ENCODE measurements at regions of chr16 and their contacts with region 1.

Region 1: GRCh38 chr16:48632137-48632774 is 22.3 kb upstream of the N4BP1 start:
- DNase-seq: no peak
- ATAC-seq: no peak
- H3K4me3 Mint-ChIP-seq: no peak overlapping the region
- H3K27ac Mint-ChIP-seq: no peak overlapping the region
- H3K4me1 Mint-ChIP-seq: peaks cover 8% of the 10 kb centered on the region
- H3K27me3 Mint-ChIP-seq: no peaks in the 10 kb centered on the region

Region 2: DNA sequence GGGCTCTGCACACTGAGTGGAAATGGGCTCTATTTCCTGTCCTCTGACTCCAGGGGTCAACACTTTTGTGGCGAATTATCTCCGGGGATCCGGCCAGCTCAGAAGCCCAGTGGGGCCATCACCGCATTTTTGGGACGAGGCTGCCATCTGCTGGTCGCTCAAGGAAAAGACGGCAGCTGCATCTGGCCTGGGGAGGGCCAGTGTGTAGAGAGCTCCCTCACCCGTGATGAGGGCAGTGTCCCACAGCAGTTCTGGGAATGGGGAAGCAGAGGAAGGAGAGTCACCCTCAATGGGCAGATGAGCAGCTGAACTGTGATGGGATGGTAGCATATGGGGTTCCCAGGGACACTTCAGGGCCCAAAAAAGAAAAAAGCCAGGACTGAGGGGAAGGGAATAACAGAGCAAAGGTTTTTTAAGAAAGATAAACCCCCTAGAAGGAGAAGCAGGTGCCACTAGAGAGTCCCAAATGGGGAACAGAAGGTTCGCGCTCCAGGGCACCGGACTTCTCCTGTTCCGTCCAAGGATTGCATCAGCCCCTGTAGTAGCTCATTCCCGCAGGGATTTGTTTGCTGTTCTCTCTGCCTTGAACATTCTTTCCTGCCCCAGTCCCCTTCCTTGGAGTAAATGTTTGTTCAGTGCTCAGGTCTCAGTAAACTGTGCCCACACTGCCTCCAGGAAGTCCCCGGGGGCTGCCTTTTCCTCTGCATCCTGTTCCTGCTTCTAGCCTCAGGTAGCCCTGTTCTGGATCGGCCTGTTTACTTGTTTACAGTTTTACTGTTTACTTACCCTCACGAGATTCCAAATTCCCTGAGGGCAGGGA is 467.1 kb before region 1 on chr16:
- CTCF ChIA-PET with region 1: interaction called, 11 read pairs
- POLR2A ChIA-PET with region 1: no interaction called
- DNase-seq: peak; percentile 71
- ATAC-seq: peak; percentile 96
- H3K4me3 Mint-ChIP-seq: no peak overlapping the region
- H3K27ac Mint-ChIP-seq: no peak overlapping the region
- H3K4me1 Mint-ChIP-seq: peaks cover 11% of the 10 kb centered on the region
- H3K27me3 Mint-ChIP-seq: peaks cover 2% of the 10 kb centered on the region

Region 3: DNA sequence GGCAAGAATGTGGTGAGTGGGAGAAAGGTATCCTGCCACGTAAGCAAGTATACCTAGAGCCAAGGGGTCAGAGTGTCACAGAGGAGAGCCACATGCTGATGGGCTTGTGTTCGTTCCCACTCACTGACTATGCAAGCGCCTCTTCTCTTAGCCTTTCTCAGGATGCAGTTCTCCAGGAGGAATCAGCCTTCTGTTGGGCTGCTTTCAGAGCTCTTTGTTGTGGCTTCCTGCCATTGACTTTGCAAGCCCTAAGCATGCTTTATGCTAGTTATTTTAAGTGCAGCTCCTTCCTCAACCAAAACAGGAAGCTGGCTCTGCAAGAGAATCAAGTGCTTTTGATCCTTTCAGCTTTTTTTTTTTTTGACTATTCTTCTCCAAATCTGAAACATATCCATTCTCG is 313.6 kb before region 1 on chr16:
- CTCF ChIA-PET with region 1: interaction called, 12 read pairs
- POLR2A ChIA-PET with region 1: no interaction called
- DNase-seq: peak; percentile 61
- ATAC-seq: peak; percentile 90
- H3K4me3 Mint-ChIP-seq: peak overlapping the region; percentile 56
- H3K27ac Mint-ChIP-seq: peak overlapping the region; percentile 85
- H3K4me1 Mint-ChIP-seq: peaks cover 33% of the 10 kb centered on the region
- H3K27me3 Mint-ChIP-seq: no peaks in the 10 kb centered on the region

Region 4: GRCh38 chr16:48353565-48354163 is 278.6 kb before region 1 on chr16:
- CTCF ChIA-PET with region 1: interaction called, 41 read pairs
- POLR2A ChIA-PET with region 1: interaction called, 3 read pairs
- DNase-seq: peak; percentile 80
- ATAC-seq: peak; percentile 90
- H3K4me3 Mint-ChIP-seq: no peak overlapping the region
- H3K27ac Mint-ChIP-seq: peak overlapping the region; percentile 62
- H3K4me1 Mint-ChIP-seq: peaks cover 7% of the 10 kb centered on the region
- H3K27me3 Mint-ChIP-seq: no peaks in the 10 kb centered on the region

Region 5: GRCh38 chr16:48499923-48500381 is 132.3 kb before region 1 on chr16:
- CTCF ChIA-PET with region 1: no interaction called
- POLR2A ChIA-PET with region 1: no interaction called
- DNase-seq: no peak
- ATAC-seq: no peak
- H3K4me3 Mint-ChIP-seq: no peak overlapping the region
- H3K27ac Mint-ChIP-seq: no peak overlapping the region
- H3K4me1 Mint-ChIP-seq: no peaks in the 10 kb centered on the region
- H3K27me3 Mint-ChIP-seq: no peaks in the 10 kb centered on the region

Region 6: GRCh38 chr16:48526058-48526957 is 105.9 kb before region 1 on chr16:
- CTCF ChIA-PET with region 1: interaction called, 10 read pairs
- POLR2A ChIA-PET with region 1: no interaction called
- DNase-seq: peak; percentile 46
- ATAC-seq: peak; percentile 61
- H3K4me3 Mint-ChIP-seq: no peak overlapping the region
- H3K27ac Mint-ChIP-seq: no peak overlapping the region
- H3K4me1 Mint-ChIP-seq: no peaks in the 10 kb centered on the region
- H3K27me3 Mint-ChIP-seq: no peaks in the 10 kb centered on the region

Region 7: GRCh38 chr16:48576927-48577326 is 55.3 kb before region 1 on chr16:
- CTCF ChIA-PET with region 1: no interaction called
- POLR2A ChIA-PET with region 1: no interaction called
- DNase-seq: no peak
- ATAC-seq: no peak
- H3K4me3 Mint-ChIP-seq: no peak overlapping the region
- H3K27ac Mint-ChIP-seq: peak overlapping the region; percentile 3
- H3K4me1 Mint-ChIP-seq: peaks cover 38% of the 10 kb centered on the region
- H3K27me3 Mint-ChIP-seq: no peaks in the 10 kb centered on the region

Region 8: GRCh38 chr16:48608871-48609651 is 23.2 kb before region 1 on chr16:
- CTCF ChIA-PET with region 1: interaction called, 21 read pairs
- POLR2A ChIA-PET with region 1: interaction called, 5 read pairs
- DNase-seq: peak; percentile 56
- ATAC-seq: peak; percentile 7
- H3K4me3 Mint-ChIP-seq: no peak overlapping the region
- H3K27ac Mint-ChIP-seq: peak overlapping the region; percentile 92
- H3K4me1 Mint-ChIP-seq: peaks cover 35% of the 10 kb centered on the region
- H3K27me3 Mint-ChIP-seq: no peaks in the 10 kb centered on the region

Region 9: DNA sequence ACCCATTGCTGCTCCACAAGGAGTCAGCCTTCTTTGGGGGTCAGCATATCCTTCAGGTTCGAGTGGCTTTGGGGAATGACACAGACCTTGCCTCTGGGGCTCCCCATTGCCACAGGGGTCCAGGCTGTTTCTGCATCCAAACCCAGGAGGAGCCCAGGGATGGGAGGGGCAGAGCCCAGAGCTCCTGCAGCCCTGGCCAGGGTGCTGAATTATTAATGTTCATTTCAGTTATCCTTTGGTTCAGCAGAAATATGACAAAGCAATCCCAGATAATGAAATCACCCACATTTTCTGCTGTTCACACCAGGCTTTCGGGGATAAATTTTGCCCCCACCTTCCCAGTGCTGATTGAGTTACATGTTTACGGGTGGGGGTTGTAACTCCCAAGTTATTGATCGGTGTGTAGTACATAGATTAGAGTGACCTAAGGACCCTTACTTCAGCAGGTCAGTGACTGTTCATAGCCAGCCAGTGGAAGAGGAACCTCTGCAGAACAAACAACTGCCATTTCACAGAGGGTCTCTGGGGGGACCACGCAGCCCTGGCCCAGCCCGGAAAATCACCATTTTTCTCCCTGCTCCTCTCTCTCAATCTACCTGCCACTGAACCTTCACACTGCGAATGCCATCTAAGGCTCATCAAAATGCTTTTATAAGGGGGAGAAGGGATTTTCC is 218.0 kb after region 1 on chr16:
- CTCF ChIA-PET with region 1: no interaction called
- POLR2A ChIA-PET with region 1: no interaction called
- DNase-seq: no peak
- ATAC-seq: no peak
- H3K4me3 Mint-ChIP-seq: no peak overlapping the region
- H3K27ac Mint-ChIP-seq: no peak overlapping the region
- H3K4me1 Mint-ChIP-seq: no peaks in the 10 kb centered on the region
- H3K27me3 Mint-ChIP-seq: no peaks in the 10 kb centered on the region